Caco-2 (cell line): ENCODE measurements at regions of chr3 and their contacts with region 1.

Region 1: DNA sequence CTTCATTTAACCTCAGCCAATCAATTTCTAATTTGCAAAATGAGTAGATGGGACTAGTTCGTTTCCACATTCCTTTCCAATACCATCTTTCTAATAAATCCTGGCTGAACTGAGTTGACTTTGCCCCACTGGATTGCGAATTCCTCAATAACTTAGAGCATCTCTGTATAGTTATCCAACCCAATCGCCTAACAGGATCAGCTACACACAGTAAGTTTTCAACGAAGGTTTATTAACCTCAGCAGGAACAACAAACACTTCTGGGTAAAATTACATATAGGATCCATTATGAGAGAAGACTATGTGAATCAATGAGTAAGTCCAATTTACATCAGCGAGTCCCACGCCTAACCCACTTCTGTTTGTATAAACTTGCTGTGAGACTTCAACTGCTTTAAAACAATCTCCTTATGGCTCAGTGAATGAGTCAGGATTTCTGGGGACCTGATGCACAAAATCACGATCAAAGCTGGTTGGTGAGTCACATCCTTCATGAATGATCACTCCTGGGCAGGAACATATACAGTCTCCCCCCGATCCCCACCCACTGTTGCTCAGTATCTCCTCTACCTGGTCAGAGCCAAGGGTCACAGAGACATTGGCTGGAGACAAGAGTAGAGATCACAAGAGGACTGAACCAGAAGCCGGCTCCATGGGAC is 142.8 kb downstream of the EDEM1 start:
- DNase-seq: no peak
- H3K4me3 ChIP-seq: no peak overlapping the region
- H3K4me3 Mint-ChIP-seq: no peak overlapping the region
- H3K27ac Mint-ChIP-seq: peak overlapping the region; percentile 88
- H3K4me1 ChIP-seq: peaks cover 35% of the 10 kb centered on the region
- H3K4me1 Mint-ChIP-seq: peaks cover 21% of the 10 kb centered on the region
- H3K27me3 ChIP-seq: 0 out of 2 replicates have a peak, but pooled peaks cover 1% of the 10 kb centered on the region
- H3K27me3 Mint-ChIP-seq: no peaks in the 10 kb centered on the region
- CTCF ChIP-seq: no peak

Region 2: GRCh38 chr3:5366746-5367145 is 36.5 kb after region 1 on chr3:
- CTCF ChIA-PET with region 1: no interaction called
- POLR2A ChIA-PET with region 1: no interaction called
- intact Hi-C with region 1: loop called (anchors 5 kb)
- DNase-seq: no peak
- H3K4me3 ChIP-seq: no peak overlapping the region
- H3K4me3 Mint-ChIP-seq: no peak overlapping the region
- H3K27ac Mint-ChIP-seq: no peak overlapping the region
- H3K4me1 ChIP-seq: peaks cover 15% of the 10 kb centered on the region
- H3K4me1 Mint-ChIP-seq: peaks cover 6% of the 10 kb centered on the region
- H3K27me3 ChIP-seq: no peaks in the 10 kb centered on the region
- H3K27me3 Mint-ChIP-seq: no peaks in the 10 kb centered on the region
- CTCF ChIP-seq: no peak

Region 3: DNA sequence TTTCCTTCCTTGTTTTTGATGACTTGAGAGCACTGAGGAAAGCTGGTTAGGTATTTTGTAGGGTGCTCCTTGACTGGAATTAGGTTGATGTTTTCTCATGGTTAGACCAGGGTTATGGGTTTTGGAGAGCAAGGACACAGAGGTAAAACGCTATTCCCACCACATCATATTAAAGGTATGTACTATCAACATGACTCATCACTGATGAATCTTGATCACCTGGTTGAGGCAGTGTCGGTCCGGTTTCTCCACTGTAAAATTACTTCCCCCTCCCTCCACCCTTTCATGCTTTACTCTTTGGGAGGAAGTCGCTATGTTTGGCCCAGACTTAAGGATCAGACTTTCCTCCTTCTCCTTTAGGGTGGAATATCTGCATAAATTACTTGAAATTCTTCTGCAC is 58.8 kb after region 1 on chr3:
- CTCF ChIA-PET with region 1: no interaction called
- POLR2A ChIA-PET with region 1: no interaction called
- intact Hi-C with region 1: loop called (anchors 1 kb)
- DNase-seq: peak; percentile 75 to 77
- H3K4me3 ChIP-seq: no peak overlapping the region
- H3K4me3 Mint-ChIP-seq: no peak overlapping the region
- H3K27ac Mint-ChIP-seq: peak overlapping the region; percentile 78
- H3K4me1 ChIP-seq: peaks cover 34% of the 10 kb centered on the region
- H3K4me1 Mint-ChIP-seq: peaks cover 22% of the 10 kb centered on the region
- H3K27me3 ChIP-seq: no peaks in the 10 kb centered on the region
- H3K27me3 Mint-ChIP-seq: no peaks in the 10 kb centered on the region
- CTCF ChIP-seq: no peak

Region 4: DNA sequence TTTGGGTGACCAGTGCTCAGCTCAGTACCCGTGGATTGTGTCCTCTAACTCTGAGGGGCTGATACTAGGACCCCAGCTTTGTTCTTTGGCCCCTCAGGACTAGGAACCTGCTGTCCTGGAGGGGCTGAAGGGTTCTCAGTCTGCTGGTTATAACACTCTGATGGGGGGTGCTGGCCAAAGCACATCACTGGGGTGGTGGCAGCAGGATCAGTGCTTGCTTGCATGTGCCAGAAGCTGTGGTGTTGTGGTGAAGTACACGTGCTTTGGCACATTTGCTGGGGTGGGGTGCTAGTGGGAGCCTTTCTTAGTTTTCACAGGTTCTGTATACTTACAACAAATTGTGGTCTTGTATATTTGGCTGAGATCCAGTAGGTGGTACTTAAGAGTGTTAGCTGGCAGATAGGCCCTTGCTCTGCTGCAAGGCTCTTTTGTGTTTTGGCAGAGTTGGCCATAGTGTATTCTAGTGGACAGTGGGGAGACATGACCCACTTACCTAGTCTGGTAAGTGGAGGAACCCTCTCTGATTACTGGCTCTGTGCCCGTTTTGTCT is 201.5 kb after region 1 on chr3:
- CTCF ChIA-PET with region 1: no interaction called
- POLR2A ChIA-PET with region 1: no interaction called
- intact Hi-C with region 1: loop called (anchors 10 kb)
- DNase-seq: no peak
- H3K4me3 ChIP-seq: no peak overlapping the region
- H3K4me3 Mint-ChIP-seq: no peak overlapping the region
- H3K27ac Mint-ChIP-seq: no peak overlapping the region
- H3K4me1 ChIP-seq: no peaks in the 10 kb centered on the region
- H3K4me1 Mint-ChIP-seq: no peaks in the 10 kb centered on the region
- H3K27me3 ChIP-seq: no peaks in the 10 kb centered on the region
- H3K27me3 Mint-ChIP-seq: no peaks in the 10 kb centered on the region
- CTCF ChIP-seq: no peak